GM12878 (cell line): ENCODE measurements at regions of chr4 and their contacts with region 1.

Region 1: DNA sequence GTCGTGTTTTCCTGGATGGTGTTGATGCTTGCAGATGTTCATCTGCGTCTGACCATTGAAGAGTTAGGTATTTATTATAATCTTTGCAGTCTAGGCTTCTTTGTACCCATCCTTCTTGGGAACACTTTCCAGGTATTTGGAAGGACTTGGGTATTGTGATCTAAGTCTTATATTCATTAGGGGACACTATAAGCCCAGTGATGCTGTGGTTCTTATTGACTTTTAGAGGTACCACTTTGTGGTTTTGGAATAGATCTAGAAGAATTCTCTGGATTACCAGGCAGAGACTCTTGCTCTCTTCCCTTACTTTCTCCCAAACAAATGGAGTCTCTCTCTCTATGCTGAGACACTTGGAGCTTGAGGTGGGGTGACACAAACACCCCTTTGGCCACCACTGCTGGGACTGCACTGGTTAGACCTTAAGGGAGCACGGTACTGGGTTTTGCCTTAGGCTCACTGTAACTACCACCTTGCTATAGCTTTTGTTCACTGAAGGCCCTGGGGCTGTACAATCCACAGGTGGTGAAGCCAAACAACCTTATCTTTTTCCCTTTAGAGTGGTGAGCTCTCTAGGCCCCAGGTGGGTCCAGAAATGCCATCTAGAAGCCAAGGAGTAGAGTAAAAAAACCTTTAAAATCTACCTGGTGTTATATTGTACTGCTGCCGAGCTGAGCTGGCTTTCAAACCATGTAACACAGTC is 41.7 kb downstream of the AFM start:
- DNase-seq: no peak
- ATAC-seq: no peak
- H3K4me3 ChIP-seq: no peak overlapping the region
- H3K27ac ChIP-seq: no peak overlapping the region
- H3K4me1 ChIP-seq: no peaks in the 10 kb centered on the region; the same call in 1 of the 2 replicates
- H3K27me3 ChIP-seq: no peaks in the 10 kb centered on the region
- CTCF ChIP-seq: no peak
- EP300 ChIP-seq: no peak
- POLR2A ChIP-seq: no peak
- RAD21 ChIP-seq: no peak; the same call in 1 of the 2 replicates

Region 2: DNA sequence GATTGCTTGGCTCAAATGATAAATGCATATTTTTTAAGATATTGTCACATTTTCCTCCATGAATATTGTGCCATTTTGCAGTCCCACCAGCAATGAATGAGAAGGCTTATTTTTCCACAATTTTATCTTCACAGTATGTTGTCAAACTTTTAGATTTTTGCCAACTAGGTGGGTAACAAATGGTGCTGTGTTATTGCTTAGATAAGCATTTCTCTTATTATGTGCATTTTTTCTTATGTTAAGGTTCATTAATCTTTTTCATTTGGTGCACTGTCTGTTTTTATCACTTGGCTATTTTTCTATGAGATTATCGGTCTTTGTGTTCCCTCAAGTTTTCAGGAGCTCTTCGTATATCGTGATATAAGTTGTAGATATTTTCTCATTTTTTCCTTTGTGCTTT is 55.1 kb before region 1 on chr4:
- CTCF ChIA-PET with region 1: no interaction called
- POLR2A ChIA-PET with region 1: no interaction called
- RAD21 ChIA-PET with region 1: no interaction called
- SMC1A ChIA-PET with region 1: no interaction called
- in situ Hi-C with region 1: no loop called
- intact Hi-C with region 1: no loop called
- DNase-seq: no peak
- ATAC-seq: no peak
- H3K4me3 ChIP-seq: no peak overlapping the region
- H3K27ac ChIP-seq: no peak overlapping the region
- H3K4me1 ChIP-seq: no peaks in the 10 kb centered on the region
- H3K27me3 ChIP-seq: no peaks in the 10 kb centered on the region
- CTCF ChIP-seq: no peak
- EP300 ChIP-seq: no peak
- POLR2A ChIP-seq: no peak
- RAD21 ChIP-seq: no peak

Region 3: DNA sequence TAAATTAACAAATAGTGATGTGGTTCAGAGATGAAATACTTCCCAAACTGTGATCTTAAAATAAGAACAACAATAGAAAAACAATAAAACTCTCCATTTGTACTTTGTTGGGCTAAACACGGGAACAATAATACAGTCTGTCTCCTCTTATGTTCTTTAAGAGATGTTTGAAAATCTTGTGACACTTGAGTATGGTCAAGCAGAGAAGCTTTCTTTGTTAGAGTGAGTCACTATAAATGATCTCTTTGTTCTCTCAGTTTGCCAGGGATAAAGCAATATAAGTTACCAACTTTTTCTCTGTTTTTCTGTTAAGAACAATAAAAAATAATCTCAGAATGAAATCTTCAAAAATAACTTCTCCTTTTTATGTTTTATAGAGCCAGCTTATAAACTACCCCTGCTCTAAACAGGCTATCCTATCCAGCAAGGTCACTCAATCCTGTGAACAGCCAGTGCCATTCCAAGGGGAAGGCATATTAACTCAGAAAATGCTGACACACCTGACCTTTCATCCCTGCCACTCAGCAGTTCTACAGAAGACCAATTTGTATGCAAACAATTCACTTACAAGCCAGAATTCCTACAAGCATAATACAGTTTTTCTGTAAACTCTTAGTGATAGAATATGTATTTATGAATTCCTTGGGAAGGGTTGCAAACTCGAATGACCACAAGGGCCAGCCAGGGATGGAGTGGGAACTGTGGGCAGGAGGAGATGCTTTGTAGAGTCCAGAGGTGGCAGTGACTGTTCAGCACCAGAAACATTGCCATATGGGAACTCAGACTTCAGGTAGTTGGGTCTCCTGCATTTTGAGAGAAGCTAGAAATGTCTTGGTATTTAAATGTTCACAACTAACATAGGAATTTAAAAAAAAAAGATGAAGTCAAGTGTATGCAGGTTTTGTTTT is 10.5 kb after region 1 on chr4:
- CTCF ChIA-PET with region 1: interaction called, 9 read pairs
- POLR2A ChIA-PET with region 1: no interaction called
- RAD21 ChIA-PET with region 1: no interaction called
- SMC1A ChIA-PET with region 1: interaction called, 10 read pairs
- in situ Hi-C with region 1: no loop called
- intact Hi-C with region 1: no loop called
- DNase-seq: no peak
- ATAC-seq: no peak
- H3K4me3 ChIP-seq: no peak overlapping the region
- H3K27ac ChIP-seq: no peak overlapping the region
- H3K4me1 ChIP-seq: peaks cover 5% of the 10 kb centered on the region; the same call in 1 of the 2 replicates
- H3K27me3 ChIP-seq: no peaks in the 10 kb centered on the region
- CTCF ChIP-seq: no peak
- EP300 ChIP-seq: no peak
- POLR2A ChIP-seq: no peak
- RAD21 ChIP-seq: no peak